ENCODE measurements at regions of chr5 and their contacts with region 1.

Region 1: GRCh38 chr5:1523771-1524480 is at the start of gene LPCAT1:
- DNase-seq: peak; percentile 68 to 79 (median 77)
- H3K4me3 ChIP-seq: peak within 1 kb of the TSS; percentile 63
- H3K4me3 Mint-ChIP-seq: peak within 1 kb of the TSS; percentile 88 to 95 (median 92)
- H3K27ac ChIP-seq: peak within 1 kb of the TSS; percentile 59
- H3K27ac Mint-ChIP-seq: peak within 1 kb of the TSS; percentile 83 to 96 (median 90)
- H3K4me1 ChIP-seq: peaks cover 35% of the 10 kb centered on the region
- H3K4me1 Mint-ChIP-seq: peaks cover 29 to 45% (median 34%) of the 10 kb centered on the region in 3 donors
- H3K27me3 ChIP-seq: no peaks in the 10 kb centered on the region
- H3K27me3 Mint-ChIP-seq: no peaks in the 10 kb centered on the region
- total RNA-seq, gene LPCAT1: 92.5 to 101 TPM

Region 2: DNA sequence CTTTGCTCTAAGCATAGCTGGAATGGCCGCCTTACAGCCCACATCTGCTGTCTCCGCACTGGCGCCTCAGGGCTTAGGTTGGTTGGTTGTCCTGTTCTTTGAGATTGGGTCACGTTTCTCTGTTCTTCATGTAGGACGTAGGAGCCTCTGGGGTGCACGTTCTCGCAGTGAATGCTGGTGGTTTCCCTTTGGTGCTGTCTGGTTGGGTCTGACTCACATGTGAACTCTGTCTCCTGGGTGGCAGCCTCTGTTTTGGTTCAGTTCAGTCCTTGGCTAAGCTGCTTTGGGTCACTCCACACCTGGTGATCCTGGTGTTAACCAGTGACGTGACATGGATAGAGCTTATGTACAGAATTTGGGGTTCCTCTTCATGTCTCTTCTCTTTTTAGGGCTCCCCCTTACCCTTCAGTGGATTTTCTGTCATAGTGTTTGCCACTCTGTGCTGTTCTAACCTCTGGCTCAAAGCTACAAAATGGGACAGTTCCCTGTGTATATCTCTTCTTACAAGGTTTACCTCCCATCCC is 12.5 kb after region 1 on chr5:
- CTCF ChIA-PET with region 1: interaction called, 3 read pairs
- POLR2A ChIA-PET with region 1: interaction called, 20 read pairs
- DNase-seq: peak; percentile 60 to 87 (median 69)
- H3K4me3 ChIP-seq: peak overlapping the region; percentile 51
- H3K4me3 Mint-ChIP-seq: peak overlapping the region; percentile 28 to 90 (median 84)
- H3K27ac ChIP-seq: peak overlapping the region; percentile 74
- H3K27ac Mint-ChIP-seq: peak overlapping the region; percentile 93 to 99 (median 95)
- H3K4me1 ChIP-seq: peaks cover 26% of the 10 kb centered on the region
- H3K4me1 Mint-ChIP-seq: peaks cover 29 to 38% (median 34%) of the 10 kb centered on the region in 3 donors
- H3K27me3 ChIP-seq: no peaks in the 10 kb centered on the region
- H3K27me3 Mint-ChIP-seq: peaks cover 0 to 3% of the 10 kb centered on the region in 2 donors